Natural killer cell (primary cell): ENCODE measurements at regions of chr17 and their contacts with region 1.

Region 1: GRCh38 chr17:43393944-43394482 is 4.8 kb upstream of the ARL4D start:
- DNase-seq: peak; percentile 80 to 94
- ATAC-seq: peak; percentile 24 to 60 (median 42)
- H3K4me3 ChIP-seq: no peak overlapping the region
- H3K4me3 Mint-ChIP-seq: no peak overlapping the region
- H3K27ac ChIP-seq: no peak overlapping the region
- H3K27ac Mint-ChIP-seq: no peak overlapping the region
- H3K4me1 ChIP-seq: peaks cover 33% of the 10 kb centered on the region
- H3K4me1 Mint-ChIP-seq: peaks cover 24 to 25% of the 10 kb centered on the region in 2 donors
- H3K27me3 ChIP-seq: no peaks in the 10 kb centered on the region
- H3K27me3 Mint-ChIP-seq: no peaks in the 10 kb centered on the region
- CTCF ChIP-seq: peak; percentile 85

Region 2: DNA sequence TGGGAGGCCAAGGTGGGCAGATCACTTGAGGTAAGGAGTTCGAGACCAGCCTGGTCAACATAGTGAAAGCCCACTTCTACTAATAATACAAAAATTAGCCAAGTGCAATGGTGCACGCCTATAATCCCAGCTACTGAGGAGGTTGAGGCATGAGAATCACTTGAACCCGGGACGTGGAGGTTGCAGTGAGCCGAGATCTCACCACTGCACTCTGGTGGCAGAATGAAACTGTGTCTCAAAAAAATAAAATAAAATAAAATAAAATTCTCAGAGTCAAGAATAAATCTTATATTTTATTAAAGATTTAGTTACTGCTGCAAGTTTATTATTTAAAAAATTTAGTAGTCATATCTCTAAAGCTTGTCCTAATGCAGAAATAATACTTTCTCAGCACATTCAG is 34.5 kb after region 1 on chr17:
- intact Hi-C with region 1: loop called (anchors 1 kb)
- DNase-seq: no peak
- ATAC-seq: no peak
- H3K4me3 ChIP-seq: no peak overlapping the region
- H3K4me3 Mint-ChIP-seq: no peak overlapping the region
- H3K27ac ChIP-seq: no peak overlapping the region
- H3K27ac Mint-ChIP-seq: no peak overlapping the region
- H3K4me1 ChIP-seq: no peaks in the 10 kb centered on the region
- H3K4me1 Mint-ChIP-seq: no peaks in the 10 kb centered on the region
- H3K27me3 ChIP-seq: no peaks in the 10 kb centered on the region
- H3K27me3 Mint-ChIP-seq: peaks cover 5 to 9% of the 10 kb centered on the region in 2 donors
- CTCF ChIP-seq: no peak